Right ventricle myocardium inferior (tissue), 1 donor: ENCODE measurements at regions of chr19 and their contacts with region 1.

Region 1: DNA sequence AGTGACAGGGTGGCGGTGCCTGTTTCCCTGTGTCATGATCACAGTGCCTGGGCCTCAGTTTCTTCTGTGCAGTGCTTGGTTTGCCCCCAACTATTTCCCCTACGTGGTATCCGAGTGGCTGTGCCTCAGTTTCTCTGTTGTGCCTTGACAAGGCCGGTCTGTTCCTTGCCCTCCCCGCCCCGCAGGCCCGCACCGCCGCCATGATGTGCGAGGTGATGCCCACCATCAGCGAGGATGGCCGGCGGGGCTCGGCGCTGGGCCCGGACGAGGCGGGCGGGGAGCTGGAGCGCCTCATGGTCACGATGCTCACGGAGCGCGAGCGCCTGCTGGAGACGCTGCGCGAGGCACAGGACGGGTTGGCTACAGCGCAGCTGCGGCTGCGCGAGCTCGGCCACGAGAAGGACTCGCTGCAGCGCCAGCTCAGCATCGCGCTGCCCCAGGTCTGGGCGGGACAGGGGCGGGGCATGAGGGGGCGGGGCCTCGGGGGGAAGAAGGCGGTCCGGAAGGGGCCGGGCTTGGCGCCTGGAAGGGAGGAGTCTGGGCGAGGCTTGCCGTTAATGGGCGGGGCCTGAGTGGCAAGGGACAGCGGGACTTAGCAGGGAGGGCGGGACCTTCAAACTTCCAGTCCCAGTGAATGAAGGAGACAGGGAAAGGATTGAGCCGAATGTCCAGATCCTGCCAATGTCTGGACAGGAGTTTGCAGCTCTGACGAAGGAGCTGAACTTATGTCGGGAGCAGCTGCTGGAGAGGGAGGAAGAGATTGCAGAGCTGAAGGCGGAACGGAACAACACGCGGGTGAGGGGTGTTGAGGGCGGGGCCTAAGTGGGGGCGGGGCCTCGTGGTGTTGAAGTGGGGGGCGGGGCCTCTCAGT is 8.6 kb downstream of the PPFIA3 start:
- DNase-seq: peak; percentile 96
- ATAC-seq: peak; percentile 98

Region 2: DNA sequence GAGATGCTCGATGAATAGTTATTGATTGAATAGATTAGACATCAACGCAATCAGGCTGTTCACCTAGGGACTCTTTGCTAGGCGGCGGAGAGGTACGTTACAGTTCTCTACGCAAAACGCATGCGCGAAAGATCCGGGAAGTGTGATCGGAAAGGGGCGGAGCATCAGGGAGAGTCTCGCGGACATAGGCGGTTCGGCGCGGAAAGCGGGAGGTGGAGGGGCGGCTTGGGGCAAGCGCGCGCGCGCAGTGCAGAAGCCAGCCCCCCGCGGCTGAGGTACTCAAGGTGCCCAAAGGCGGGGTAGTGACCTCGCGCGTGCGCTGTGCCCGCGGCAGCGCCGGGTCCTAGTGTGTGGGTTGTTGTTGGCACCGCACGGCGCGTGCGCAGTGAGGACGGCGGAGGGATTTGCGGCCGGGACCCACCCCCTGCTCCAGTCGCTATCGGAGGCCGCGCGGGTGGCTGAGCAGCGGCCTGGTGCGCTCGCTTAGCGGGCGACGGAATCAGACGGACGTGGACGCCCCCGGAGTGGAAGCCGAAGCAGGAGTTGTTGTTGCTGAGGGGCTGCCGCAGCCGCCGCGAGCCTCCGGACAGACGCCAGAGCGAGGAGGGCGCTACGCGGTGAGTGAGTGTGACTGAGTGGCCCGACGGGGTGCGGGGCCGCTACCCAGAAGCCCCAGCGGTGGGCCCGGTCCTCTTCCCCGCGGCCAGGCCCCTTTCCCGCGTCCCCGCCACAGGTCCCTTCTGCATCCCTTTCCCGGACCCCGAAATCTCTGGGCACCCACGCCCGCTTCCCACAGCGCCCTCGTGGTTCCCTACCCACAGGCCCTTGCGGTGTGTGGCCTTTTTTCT is 42.7 kb before region 1 on chr19 and contains the start of gene SNRNP70:
- intact Hi-C with region 1: no loop called
- DNase-seq: peak; percentile 100
- ATAC-seq: peak; percentile 99
- total RNA-seq, gene SNRNP70: 110 TPM

Region 3: GRCh38 chr19:49142866-49143335 is 15.0 kb after region 1 on chr19:
- intact Hi-C with region 1: loop called (anchors 1 kb)
- DNase-seq: peak; percentile 93
- ATAC-seq: peak; percentile 98